ENCODE measurements at regions of chrX and their contacts with region 1.

Region 1: DNA sequence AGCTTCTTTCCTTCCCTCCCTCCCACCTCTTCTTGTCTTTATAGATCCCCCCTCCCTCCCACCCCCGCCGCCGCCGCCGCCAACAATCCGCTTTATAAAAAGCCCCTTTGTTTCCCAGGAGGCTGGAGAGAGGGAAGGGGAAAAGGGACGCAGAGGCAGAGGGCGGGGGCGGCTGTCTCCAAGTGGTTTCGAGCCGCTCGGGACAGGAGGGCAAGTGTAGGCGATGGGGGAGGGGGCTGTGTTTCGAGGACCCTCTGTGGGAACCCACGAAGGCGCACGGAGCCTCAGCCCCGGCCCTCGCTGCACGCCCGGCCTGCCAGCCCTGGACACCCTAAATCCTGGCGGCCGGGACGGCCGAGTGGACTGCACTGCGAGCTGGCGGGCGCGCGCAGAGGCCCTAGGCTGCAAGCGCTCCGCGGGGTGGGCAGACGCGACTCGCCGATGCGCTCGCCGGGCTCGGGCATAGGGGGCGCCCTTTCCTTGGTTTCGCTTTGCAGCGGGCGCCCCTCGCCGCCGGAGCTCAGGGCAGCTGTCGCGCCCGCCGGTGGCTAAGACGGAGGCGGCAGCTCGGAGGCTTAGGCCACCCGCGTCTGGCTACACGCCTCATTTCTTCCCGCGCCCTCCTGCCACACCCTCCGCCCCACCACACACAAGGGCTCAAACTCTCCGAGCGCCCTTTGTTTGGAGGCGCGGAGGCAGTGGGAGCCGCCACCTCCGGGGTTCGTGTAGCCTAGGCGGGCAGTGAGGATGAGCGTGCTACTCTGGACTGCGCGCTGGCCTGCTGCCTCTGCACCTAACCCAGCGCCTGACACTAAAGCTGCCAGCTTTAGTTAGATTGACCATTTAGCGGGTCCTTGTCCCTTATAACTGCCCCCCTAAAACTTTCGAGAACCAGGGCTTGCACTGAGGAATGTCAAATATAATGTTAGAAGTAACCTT is 2.2 kb downstream of the MAMLD1 start:
- DNase-seq: peak; percentile 79
- H3K4me3 ChIP-seq: peak overlapping the region; percentile 53
- H3K27ac ChIP-seq: peak overlapping the region; percentile 74
- H3K4me1 ChIP-seq: no peaks in the 10 kb centered on the region
- H3K27me3 ChIP-seq: peaks cover 21% of the 10 kb centered on the region
- CTCF ChIP-seq: peak; percentile 63

Region 2: DNA sequence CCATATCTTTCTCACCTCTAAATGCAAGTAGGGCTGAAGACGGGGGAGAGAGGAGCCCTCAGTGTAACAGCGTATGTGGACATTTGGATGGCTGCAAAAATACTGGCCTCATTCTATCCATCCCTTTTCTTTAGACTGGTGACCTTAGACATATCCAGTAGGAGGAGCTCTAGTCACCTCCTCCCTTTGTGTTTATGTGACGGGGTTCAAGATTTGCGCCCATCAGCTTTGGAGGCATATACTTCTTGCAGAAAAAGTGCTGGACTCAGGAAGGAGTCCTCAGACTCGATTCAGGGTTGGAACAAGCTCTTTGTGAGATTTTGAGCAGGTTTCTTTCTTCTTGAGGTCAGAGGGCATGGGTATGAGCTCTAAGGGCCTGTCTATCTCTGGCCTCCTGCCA is 84.0 kb after region 1 on chrX:
- CTCF ChIA-PET with region 1: no interaction called
- POLR2A ChIA-PET with region 1: no interaction called
- intact Hi-C with region 1: loop called (anchors 5 kb)
- DNase-seq: no peak
- H3K4me3 ChIP-seq: no peak overlapping the region
- H3K27ac ChIP-seq: no peak overlapping the region
- H3K4me1 ChIP-seq: peaks cover 33% of the 10 kb centered on the region
- H3K27me3 ChIP-seq: no peaks in the 10 kb centered on the region
- CTCF ChIP-seq: peak; percentile 37

Region 3: DNA sequence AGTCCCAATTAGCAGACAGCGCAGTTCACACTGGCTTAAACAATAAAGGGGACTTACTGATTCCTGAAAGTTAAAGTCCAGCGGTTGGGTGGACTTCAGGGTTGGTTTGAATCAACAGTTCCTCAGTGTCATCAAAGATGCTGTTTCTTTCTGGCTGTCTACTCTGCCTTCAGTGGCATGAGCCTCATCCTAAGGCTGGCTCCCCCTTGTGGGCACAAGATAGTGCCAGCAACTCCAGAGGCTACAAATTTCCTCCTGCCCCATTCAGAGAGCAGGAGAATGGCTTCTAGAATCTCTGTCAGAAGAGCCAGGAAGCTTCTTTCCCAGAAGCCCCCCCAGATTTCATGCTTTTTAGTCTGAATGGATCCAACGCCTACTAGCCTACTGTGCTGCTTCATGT is 120.7 kb after region 1 on chrX:
- CTCF ChIA-PET with region 1: no interaction called
- POLR2A ChIA-PET with region 1: no interaction called
- intact Hi-C with region 1: loop called (anchors 2 kb)
- DNase-seq: peak; percentile 65
- H3K4me3 ChIP-seq: no peak overlapping the region
- H3K27ac ChIP-seq: no peak overlapping the region
- H3K4me1 ChIP-seq: no peaks in the 10 kb centered on the region
- H3K27me3 ChIP-seq: no peaks in the 10 kb centered on the region
- CTCF ChIP-seq: peak; percentile 72

Region 4: DNA sequence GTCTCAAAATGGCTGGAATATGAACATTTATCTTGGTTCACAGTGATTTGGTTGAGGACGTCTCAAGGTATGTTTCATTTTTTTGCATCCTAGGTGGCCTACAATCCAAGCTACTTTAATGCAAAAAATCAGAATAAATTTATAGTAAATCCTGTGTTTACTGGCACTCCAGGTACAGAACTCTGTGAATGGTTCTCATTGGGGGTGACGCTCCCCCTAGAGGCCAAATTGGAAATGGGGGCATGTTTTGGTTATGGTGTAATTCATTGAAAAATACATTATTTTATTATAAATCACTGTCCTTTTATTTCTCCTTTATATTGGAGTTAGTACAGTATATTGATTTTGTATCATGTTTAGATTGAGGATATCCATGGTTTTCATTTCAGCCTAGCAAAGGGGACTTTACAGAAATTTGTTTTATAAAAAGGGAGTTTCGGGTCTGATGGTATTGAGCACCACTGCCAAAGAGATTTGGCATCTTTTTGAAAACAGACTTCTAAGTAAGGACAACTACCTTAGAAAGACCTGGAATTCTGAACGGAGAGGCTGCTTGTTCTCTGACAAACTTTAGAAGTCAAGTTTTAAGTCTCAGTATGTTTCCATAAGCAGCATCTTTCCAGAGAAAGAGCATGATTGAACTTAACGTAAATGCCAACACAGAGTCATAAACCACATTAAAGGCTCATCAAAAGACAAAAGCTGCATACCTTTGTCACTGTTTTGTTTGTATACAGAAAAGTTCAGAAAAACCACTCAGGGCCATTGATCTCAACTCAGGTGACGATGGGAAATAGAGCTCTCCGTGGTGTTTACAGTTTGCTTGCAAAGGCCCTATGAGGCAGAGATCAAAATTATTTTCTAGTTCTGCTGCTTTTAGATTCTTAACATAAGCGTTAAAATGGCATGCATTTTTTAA is 222.5 kb after region 1 on chrX:
- CTCF ChIA-PET with region 1: no interaction called
- POLR2A ChIA-PET with region 1: no interaction called
- intact Hi-C with region 1: loop called (anchors 5 kb)
- DNase-seq: peak; percentile 39
- H3K4me3 ChIP-seq: no peak overlapping the region
- H3K27ac ChIP-seq: no peak overlapping the region
- H3K4me1 ChIP-seq: no peaks in the 10 kb centered on the region
- H3K27me3 ChIP-seq: no peaks in the 10 kb centered on the region
- CTCF ChIP-seq: peak; percentile 83